ENCODE measurements at regions of chr15 and their contacts with region 1.

Region 1: DNA sequence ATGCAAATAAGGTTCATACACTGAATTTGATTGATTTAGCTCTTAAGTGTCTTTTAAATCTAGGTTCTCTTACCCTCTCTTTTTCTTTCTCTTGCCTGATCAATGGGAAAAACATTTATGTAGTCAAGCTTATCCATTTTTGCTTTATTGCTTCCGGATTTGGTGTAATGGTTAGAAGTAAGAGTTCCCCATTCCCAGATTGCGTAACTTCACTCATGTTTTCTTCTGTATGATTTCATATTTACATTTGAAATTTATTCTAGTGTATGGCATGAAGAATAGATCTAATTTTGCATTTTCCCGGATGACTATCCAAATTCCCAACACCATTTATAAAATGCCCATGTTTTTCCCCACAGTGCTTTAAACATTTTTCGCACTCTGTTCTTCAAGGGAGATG is 27.9 kb upstream of the SV2B start:
- DNase-seq: no peak
- H3K4me3 Mint-ChIP-seq: no peak overlapping the region
- H3K27ac Mint-ChIP-seq: no peak overlapping the region
- H3K4me1 Mint-ChIP-seq: no peaks in the 10 kb centered on the region
- H3K27me3 Mint-ChIP-seq: peaks cover 6% of the 10 kb centered on the region

Region 2: DNA sequence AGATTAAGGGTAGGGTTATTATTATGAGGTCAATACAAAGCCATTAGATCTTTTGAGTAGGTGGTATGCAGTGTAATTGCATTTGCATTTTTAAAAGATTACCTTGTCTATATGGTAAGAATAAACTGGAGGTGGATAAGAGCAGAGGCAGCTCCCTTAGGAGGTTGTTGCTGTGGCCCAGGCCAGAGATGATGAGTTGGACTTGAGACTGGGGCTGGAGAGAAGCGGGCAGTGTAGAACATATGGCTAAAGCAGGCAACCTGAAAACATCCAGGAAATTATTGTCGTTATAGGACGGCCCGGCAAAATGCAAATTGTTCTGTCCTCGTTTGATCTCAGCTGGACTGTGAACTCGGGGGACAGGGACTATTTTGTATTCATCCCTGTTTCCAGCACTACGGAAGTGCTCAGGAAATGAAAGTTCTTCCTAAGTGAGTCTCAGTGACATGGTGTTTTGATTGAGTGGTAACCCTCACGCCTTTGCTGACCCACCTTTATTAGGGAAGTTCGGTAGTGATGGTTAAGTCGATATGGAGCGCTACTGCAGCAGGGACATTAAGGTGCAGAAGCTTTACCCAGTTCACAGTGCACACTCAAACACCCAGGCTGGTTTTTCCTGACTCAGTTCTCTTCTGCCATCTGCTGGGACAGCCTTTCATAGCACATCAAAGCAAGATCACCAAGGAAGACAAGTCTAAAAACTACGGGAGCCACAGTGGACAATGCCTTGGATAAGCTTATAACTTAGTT is 22.6 kb before region 1 on chr15:
- CTCF ChIA-PET with region 1: no interaction called
- intact Hi-C with region 1: no loop called
- DNase-seq: peak; percentile 83
- H3K4me3 Mint-ChIP-seq: no peak overlapping the region
- H3K27ac Mint-ChIP-seq: no peak overlapping the region
- H3K4me1 Mint-ChIP-seq: peaks cover 19% of the 10 kb centered on the region
- H3K27me3 Mint-ChIP-seq: no peaks in the 10 kb centered on the region

Region 3: GRCh38 chr15:91142114-91142731 is 70.1 kb after region 1 on chr15:
- CTCF ChIA-PET with region 1: interaction called, 4 read pairs
- intact Hi-C with region 1: loop called (anchors 5 kb)
- DNase-seq: no peak
- H3K4me3 Mint-ChIP-seq: no peak overlapping the region
- H3K27ac Mint-ChIP-seq: no peak overlapping the region
- H3K4me1 Mint-ChIP-seq: no peaks in the 10 kb centered on the region
- H3K27me3 Mint-ChIP-seq: peaks cover 20% of the 10 kb centered on the region

Region 4: GRCh38 chr15:91522663-91523332 is 450.6 kb after region 1 on chr15:
- CTCF ChIA-PET with region 1: no interaction called
- intact Hi-C with region 1: no loop called
- DNase-seq: peak; percentile 17
- H3K4me3 Mint-ChIP-seq: no peak overlapping the region
- H3K27ac Mint-ChIP-seq: no peak overlapping the region
- H3K4me1 Mint-ChIP-seq: peaks cover 24% of the 10 kb centered on the region
- H3K27me3 Mint-ChIP-seq: no peaks in the 10 kb centered on the region

Measured in activated naive CD4-positive, alpha-beta T cell treated with anti-CD3 and anti-CD28 coated beads for 36 hours (primary cell).